ENCODE measurements at regions of chr1 and their contacts with region 1.

Region 1: DNA sequence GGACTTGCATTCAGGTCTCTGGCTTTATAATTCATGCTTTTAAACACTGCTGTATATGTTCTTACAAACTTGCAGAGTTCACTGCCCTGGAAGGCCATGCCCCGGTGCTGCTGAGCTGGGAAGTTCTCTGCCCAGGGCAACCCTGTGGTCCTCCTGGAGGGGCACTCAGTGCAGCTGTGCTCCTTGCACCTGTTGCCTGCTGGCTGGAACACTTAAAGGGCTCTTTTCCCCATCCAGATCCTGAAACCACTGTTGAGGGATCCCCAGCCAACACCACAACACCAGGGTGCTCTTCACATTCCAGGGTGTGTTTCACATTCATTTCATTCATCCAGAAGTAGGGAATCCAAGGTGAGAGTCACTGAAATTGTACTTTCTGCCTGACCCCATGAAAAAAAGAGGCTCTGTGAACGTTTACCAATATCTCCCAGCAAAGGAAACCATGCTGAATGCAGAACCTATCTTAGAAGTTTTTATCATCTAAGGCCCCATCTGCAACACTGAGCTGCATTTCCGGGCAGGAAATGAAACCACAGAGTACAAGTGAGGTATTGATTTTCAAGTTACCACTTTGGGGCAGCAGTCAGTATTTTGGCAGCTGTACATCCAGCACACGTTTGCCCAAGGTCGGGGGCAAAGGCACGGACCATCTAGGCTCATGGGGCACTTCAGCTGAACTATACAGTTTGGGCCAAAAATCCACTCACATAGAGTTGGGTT is 16.4 kb upstream of the KIAA0040 start:
- DNase-seq: peak; percentile 83
- ATAC-seq: peak; percentile 91
- H3K4me3 Mint-ChIP-seq: peak overlapping the region; percentile 75
- H3K27ac Mint-ChIP-seq: peak overlapping the region; percentile 99
- H3K4me1 Mint-ChIP-seq: peaks cover 49% of the 10 kb centered on the region
- H3K27me3 Mint-ChIP-seq: no peaks in the 10 kb centered on the region

Region 2: DNA sequence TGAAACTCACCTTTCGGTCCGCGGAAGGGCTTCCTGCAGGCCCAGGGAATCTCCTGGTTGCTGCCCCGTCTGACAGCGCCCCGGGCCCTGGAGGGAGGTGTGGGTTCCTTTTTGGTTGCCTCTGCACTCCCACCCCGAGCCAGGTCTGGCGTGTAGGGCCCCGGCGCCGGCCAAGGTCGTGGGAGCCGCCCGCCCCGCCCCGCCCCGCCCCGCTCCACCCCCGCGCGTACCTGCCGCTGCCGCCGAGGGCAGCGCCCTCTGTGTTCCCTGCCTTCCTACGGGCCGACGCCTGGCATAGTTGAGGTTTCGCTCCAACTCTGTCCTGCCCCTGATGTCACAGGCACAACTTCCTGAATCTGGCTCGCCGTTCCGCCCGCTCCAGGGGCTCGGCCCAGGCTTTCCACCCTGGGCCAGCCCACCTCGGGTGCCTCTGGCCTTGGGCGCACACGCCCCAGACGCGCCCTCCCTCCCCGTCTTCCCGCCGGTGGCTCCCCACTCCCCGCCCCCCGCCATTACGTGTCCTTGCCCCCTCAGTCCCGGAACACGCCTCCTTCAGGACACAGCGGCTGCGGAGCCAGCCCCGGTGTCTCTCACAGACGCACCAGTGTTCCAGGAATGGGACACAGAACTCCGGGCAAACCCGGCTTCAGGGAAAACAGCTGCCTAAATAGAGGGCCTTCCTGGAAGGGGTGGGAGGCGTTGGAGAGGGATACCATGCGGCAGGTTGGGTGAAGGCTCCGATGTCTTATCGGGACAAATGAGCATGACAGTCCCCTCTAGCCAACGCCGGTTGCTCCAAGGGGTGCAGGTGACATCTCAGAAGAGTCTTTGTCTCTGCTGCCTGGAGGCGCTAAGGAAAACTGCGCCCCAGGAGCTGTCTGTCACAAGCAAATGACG is 16.1 kb before region 1 on chr1 and contains the start of gene KIAA0040:
- CTCF ChIA-PET with region 1: interaction called, 44 read pairs
- POLR2A ChIA-PET with region 1: interaction called, 46 read pairs
- DNase-seq: peak; percentile 61
- ATAC-seq: peak; percentile 73
- H3K4me3 Mint-ChIP-seq: peak within 1 kb of the TSS; percentile 91
- H3K27ac Mint-ChIP-seq: peak within 1 kb of the TSS; percentile 87
- H3K4me1 Mint-ChIP-seq: peaks cover 64% of the 10 kb centered on the region
- H3K27me3 Mint-ChIP-seq: no peaks in the 10 kb centered on the region
- total RNA-seq, gene KIAA0040: 50.8 to 51.0 TPM

Region 3: DNA sequence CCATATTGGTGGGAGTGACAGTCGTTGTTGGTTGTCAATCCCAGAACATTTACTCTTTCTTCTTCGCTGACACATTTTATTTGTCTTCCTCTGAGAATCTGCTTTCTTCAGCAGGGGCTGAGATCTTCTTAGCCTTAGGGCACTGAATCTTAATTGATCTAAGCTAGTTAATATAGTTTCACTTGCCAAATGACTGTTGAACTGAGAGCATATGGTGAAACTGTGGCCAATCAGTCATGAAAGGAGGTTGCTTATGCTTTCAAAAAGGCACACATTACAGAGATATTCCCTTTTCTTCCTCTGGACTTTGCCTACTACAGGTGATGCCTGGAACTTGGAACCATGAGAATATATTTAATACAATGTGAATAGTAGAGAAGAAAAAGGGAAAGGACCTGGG is 43.6 kb after region 1 on chr1:
- CTCF ChIA-PET with region 1: no interaction called
- POLR2A ChIA-PET with region 1: no interaction called
- DNase-seq: no peak
- ATAC-seq: no peak
- H3K4me3 Mint-ChIP-seq: no peak overlapping the region
- H3K27ac Mint-ChIP-seq: no peak overlapping the region
- H3K4me1 Mint-ChIP-seq: no peaks in the 10 kb centered on the region
- H3K27me3 Mint-ChIP-seq: peaks cover 2% of the 10 kb centered on the region

Measured in activated CD8-positive, alpha-beta T cell treated with anti-CD3 and anti-CD28 coated beads, Interleukin-2, amount 10 ng/mL, durations not matched to agents 7 days and 5 days (primary cell).